ENCODE measurements at regions of chr21 and their contacts with region 1.

Region 1: DNA sequence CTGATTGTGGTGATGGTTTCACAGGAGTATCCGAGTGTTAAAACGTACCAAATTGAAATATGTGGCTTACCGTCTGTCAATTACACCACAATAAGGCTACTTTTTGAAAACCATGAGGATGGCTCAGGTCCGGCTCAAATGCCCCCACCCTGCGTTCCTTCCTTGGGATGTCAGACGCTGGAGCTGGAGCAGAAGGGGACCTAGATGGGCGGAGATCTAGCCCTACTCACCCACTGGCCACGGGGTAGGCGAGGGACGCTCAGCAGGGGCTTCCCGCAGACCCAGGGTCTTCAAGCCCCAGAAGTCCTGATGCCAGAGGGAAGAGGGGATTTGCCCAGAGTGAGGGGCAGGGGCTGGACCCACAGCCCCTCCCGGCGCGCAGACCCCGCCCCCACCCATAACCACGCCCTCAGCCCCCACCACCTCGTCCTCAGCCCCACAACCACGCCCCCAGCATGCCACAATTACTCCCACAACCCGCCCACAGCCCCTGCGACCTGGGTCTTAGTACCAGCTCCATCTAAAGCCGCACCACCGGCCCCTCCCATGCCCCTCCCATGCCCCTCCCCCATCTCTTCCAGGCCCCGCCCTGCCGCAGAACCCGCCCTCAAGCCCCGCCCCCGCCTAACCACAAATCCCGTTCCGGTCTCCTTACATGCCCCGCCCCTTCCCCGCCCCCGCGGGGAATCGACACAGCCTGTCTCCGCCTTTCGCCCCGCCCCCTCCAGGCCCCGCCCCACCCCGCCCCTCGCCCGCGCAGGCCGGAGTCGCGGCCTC is at the start of gene LRRC3:
- DNase-seq: peak; percentile 58 to 89 (median 76)
- ATAC-seq: peak; percentile 86
- H3K4me3 ChIP-seq: peak within 1 kb of the TSS; percentile 50 to 69
- H3K4me3 Mint-ChIP-seq: peak within 1 kb of the TSS; percentile 80
- H3K27ac ChIP-seq: no peak within 1 kb of the TSS
- H3K27ac Mint-ChIP-seq: no peak within 1 kb of the TSS
- H3K4me1 ChIP-seq: peaks cover 9% of the 10 kb centered on the region
- H3K4me1 Mint-ChIP-seq: peaks cover 5% of the 10 kb centered on the region
- H3K27me3 ChIP-seq: no peaks in the 10 kb centered on the region
- H3K27me3 Mint-ChIP-seq: peaks cover 5% of the 10 kb centered on the region
- CTCF ChIP-seq: no peak
- total RNA-seq, gene LRRC3: 0.39 to 0.68 TPM

Region 2: GRCh38 chr21:44317241-44317782 is 137.6 kb before region 1 on chr21:
- CTCF ChIA-PET with region 1: no interaction called
- POLR2A ChIA-PET with region 1: no interaction called
- intact Hi-C with region 1: no loop called
- DNase-seq: no peak
- ATAC-seq: no peak
- H3K4me3 ChIP-seq: no peak overlapping the region
- H3K4me3 Mint-ChIP-seq: no peak overlapping the region
- H3K27ac ChIP-seq: no peak overlapping the region
- H3K27ac Mint-ChIP-seq: no peak overlapping the region
- H3K4me1 ChIP-seq: no peaks in the 10 kb centered on the region
- H3K4me1 Mint-ChIP-seq: no peaks in the 10 kb centered on the region
- H3K27me3 ChIP-seq: no peaks in the 10 kb centered on the region
- H3K27me3 Mint-ChIP-seq: no peaks in the 10 kb centered on the region
- CTCF ChIP-seq: no peak

Region 3: GRCh38 chr21:44428281-44428942 is 26.5 kb before region 1 on chr21:
- CTCF ChIA-PET with region 1: no interaction called
- POLR2A ChIA-PET with region 1: no interaction called
- intact Hi-C with region 1: loop called in 1 of 2 experiments (anchors 1 kb)
- DNase-seq: peak in 7 of 9 experiments; percentile 29 to 71 (median 44)
- ATAC-seq: peak; percentile 90
- H3K4me3 ChIP-seq: no peak overlapping the region
- H3K4me3 Mint-ChIP-seq: no peak overlapping the region
- H3K27ac ChIP-seq: no peak overlapping the region
- H3K27ac Mint-ChIP-seq: no peak overlapping the region
- H3K4me1 ChIP-seq: no peaks in the 10 kb centered on the region
- H3K4me1 Mint-ChIP-seq: no peaks in the 10 kb centered on the region
- H3K27me3 ChIP-seq: peaks cover 0 to 2% of the 10 kb centered on the region in 2 experiments
- H3K27me3 Mint-ChIP-seq: no peaks in the 10 kb centered on the region
- CTCF ChIP-seq: no peak

Measured in CD8-positive, alpha-beta T cell (primary cell).